Calu3 (cell line): ENCODE measurements at regions of chr3 and their contacts with region 1.

Region 1: GRCh38 chr3:148718982-148719862 is 21.5 kb downstream of the AGTR1 start:
- DNase-seq: no peak
- H3K4me3 Mint-ChIP-seq: no peak overlapping the region
- H3K27ac Mint-ChIP-seq: no peak overlapping the region
- H3K4me1 Mint-ChIP-seq: no peaks in the 10 kb centered on the region
- H3K27me3 Mint-ChIP-seq: no peaks in the 10 kb centered on the region
- CTCF ChIP-seq: peak; percentile 66

Region 2: DNA sequence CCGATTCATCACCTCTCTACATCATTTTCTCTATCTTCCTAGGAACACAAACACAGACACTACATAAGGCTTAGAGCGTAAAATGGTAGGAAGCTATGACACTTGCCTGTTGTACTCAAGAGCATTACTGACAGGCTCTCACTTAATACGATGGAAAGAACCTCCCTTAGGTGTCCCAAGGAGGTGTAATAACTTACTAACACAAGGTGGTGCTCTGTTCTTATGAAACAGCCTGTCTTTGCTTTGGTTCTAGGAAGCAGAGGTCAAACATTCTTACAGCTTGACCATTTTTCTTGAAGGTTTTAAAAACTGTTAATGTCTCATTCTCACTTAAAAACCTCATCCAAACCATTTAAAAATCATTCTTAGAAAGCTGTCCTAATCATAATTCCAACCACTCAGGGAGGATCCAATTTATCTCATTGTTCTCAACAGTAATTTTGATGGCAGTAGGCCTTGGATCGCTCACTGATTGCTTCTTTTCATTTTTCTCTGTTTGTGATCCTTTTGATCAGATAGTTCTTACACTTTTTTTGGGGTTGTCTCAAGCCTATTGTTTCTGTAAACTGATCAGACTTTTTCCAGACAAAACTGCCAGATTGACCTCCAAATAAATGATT is 339.3 kb before region 1 on chr3:
- CTCF ChIA-PET with region 1: interaction called, 33 read pairs
- intact Hi-C with region 1: loop called (anchors 1 kb)
- DNase-seq: peak; percentile 55
- H3K4me3 Mint-ChIP-seq: no peak overlapping the region
- H3K27ac Mint-ChIP-seq: no peak overlapping the region
- H3K4me1 Mint-ChIP-seq: no peaks in the 10 kb centered on the region
- H3K27me3 Mint-ChIP-seq: no peaks in the 10 kb centered on the region
- CTCF ChIP-seq: peak; percentile 39

Region 3: DNA sequence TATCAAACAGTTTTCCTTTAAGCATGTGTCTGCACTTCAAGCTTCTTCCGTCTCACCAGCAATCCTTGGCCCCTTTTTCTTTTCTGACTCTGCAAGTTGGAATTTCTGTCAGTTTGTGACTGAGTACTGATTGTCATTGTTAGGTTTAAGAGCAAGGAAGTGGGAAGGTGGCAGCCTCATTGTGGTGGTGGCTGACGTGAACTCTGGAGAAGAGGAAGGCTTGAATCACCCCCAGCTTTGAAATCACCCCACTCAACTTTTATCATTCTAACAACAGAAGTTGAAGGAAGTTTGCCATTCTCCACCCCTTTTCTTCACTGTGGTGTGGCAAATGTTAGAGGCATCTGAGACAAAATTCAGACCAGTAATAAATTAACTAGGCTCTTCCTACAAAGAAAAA is 253.1 kb before region 1 on chr3:
- CTCF ChIA-PET with region 1: interaction called, 3 read pairs
- intact Hi-C with region 1: loop called (anchors 5 kb)
- DNase-seq: peak; percentile 18
- H3K4me3 Mint-ChIP-seq: no peak overlapping the region
- H3K27ac Mint-ChIP-seq: no peak overlapping the region
- H3K4me1 Mint-ChIP-seq: no peaks in the 10 kb centered on the region
- H3K27me3 Mint-ChIP-seq: no peaks in the 10 kb centered on the region
- CTCF ChIP-seq: no peak

Region 4: DNA sequence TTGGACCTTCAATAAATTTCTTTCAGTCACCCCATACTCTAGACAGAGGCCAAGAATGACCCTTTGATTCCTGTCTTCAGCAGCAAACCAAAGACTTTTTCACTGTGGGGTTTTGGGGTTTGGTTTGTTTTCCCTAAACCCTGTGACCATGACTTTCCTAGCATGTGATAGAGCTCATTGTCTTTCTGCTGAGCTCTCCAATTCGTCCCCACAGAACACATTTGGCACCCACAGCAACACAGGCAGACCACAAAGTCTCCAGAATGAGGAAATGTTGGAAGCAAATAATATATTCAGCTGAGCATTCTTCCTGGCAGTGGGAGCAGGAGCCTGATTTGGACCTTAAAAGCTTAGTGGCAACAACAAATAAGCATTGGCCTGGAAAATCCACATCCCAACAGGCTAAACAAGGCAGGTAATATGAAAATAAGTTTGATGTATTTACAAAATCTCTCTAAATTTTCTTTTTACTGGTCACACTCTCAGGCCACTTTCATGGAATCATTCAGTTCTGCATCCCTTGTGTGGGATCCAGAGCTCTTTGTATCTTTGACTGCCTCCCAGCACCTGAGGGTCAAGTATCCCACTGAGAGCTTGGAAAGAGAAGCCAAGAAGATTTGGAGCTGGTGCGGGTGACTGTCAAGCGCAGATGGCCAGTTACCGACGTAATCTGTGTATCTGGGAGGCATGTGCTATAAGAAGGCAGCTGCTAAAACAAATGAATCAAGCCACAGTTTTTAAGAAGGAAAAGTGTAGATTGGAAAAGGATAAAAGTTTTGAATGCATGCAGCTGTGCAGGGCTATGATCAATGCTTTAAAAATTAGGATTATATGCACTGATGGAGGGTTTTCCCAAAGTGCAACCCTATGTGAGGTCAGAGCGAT is 71.9 kb after region 1 on chr3:
- CTCF ChIA-PET with region 1: no interaction called
- intact Hi-C with region 1: no loop called
- DNase-seq: peak; percentile 26
- H3K4me3 Mint-ChIP-seq: no peak overlapping the region
- H3K27ac Mint-ChIP-seq: no peak overlapping the region
- H3K4me1 Mint-ChIP-seq: no peaks in the 10 kb centered on the region
- H3K27me3 Mint-ChIP-seq: no peaks in the 10 kb centered on the region
- CTCF ChIP-seq: no peak

Region 5: GRCh38 chr3:148974726-148975125 is 255.5 kb after region 1 on chr3:
- CTCF ChIA-PET with region 1: interaction called, 10 read pairs
- intact Hi-C with region 1: no loop called
- DNase-seq: no peak
- H3K4me3 Mint-ChIP-seq: peak overlapping the region; percentile 2
- H3K27ac Mint-ChIP-seq: no peak overlapping the region
- H3K4me1 Mint-ChIP-seq: no peaks in the 10 kb centered on the region
- H3K27me3 Mint-ChIP-seq: no peaks in the 10 kb centered on the region
- CTCF ChIP-seq: no peak